MCF 10A (cell line): ENCODE measurements at regions of chr1 and their contacts with region 1.

Region 1: DNA sequence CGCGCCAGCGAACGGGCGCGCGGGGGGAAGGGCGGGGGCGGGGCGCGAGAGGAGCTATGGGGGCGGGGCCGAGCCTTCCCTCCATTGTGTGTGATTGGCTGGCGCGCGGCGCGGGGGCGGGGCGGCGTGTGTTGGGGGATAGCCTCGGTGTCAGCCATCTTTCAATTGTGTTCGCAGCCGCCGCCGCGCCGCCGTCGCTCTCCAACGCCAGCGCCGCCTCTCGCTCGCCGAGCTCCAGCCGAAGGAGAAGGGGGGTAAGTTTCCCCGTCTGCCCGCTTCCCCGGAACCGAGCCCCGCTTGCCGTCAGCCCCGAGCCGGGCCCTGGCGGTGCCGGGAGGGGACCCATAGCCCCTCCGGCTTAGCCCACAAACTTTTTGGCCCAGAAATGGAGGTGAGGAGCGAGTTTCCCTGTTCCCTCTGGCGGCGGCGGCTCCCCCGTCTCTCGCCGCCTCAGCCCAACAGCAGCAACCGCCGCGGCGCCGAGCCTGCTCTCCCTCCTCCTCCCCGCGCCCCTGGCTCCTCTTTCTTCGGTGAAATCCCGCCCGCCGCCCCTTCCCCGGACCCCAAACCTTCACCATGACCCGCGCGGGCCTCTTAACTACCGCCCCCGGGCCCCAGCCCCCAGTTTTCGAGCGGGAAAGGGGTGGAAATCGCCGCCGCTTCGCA is at the start of gene H3-3A:
- DNase-seq: peak; percentile 100
- H3K4me3 Mint-ChIP-seq: peak within 1 kb of the TSS; percentile 100
- H3K27ac Mint-ChIP-seq: peak within 1 kb of the TSS; percentile 99
- H3K4me1 Mint-ChIP-seq: peaks cover 35% of the 10 kb centered on the region
- H3K27me3 Mint-ChIP-seq: no peaks in the 10 kb centered on the region
- CTCF ChIP-seq: no peak
- total RNA-seq, gene H3-3A: 635 and 710 TPM in 2 replicates

Region 2: DNA sequence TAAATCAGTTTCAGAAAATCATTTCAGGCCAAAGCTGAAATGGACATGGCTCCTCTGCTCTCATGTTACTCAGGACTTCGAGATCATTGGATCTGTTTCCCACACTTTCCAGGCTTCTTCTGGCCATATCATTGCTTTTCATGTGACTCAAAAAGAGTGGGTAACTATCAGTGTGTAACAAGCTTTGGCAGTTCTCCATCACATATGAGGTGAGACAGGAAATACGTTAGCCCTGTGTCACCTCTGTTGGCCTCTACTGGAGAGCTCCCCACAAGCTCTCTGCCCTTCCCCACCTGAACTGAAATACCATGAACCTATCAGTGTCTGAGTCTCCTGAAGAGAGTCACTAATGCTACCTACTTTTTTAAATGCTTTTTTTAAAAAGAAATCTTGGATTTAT is 763.1 kb before region 1 on chr1:
- CTCF ChIA-PET with region 1: no interaction called
- POLR2A ChIA-PET with region 1: no interaction called
- intact Hi-C with region 1: no loop called
- DNase-seq: peak; percentile 79
- H3K4me3 Mint-ChIP-seq: no peak overlapping the region
- H3K27ac Mint-ChIP-seq: no peak overlapping the region
- H3K4me1 Mint-ChIP-seq: peaks cover 11% of the 10 kb centered on the region
- H3K27me3 Mint-ChIP-seq: no peaks in the 10 kb centered on the region
- CTCF ChIP-seq: no peak

Region 3: DNA sequence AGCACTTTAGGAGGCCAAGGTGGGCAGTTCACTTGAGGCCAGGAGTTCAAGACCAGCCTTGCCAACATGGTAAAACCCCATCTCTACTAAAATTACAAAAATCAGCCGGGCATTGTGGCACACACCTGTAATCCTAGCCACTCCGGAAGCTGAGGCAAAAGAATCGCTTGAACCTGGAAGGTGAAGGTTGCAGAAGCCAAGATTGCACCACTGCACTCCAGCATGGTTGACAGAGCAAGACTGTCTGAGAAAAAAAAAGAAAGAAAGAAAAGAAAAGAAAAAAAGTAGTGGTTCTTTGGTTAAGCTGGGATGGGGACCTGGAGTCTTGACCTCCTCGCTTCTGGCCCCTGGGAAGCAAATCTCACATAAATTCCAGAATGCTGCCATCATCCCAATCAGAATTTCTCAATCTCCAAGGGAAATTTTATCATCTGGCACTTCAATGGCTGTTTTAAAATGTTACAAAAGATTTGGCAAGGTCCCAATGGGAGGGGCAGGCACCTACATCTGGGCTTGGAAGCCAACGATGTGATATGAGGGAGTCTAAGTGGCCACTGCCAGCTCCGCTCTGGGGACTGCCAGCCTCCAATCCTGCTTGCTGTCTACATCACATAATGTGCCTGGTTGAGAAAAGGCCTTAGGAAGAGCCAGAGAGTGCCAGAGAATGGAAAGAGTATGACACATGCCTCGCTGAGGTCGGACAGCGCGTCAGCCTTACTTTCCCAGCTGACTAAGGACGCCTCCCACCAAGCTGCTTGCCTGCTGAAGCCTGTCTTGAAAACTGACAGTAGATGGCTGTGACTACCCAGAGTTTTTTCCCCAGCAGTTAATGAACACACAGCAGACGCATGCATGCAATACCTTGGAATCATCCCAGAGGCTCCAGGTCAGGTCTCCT is 327.2 kb before region 1 on chr1:
- CTCF ChIA-PET with region 1: interaction called, 3 read pairs
- POLR2A ChIA-PET with region 1: interaction called, 13 read pairs
- intact Hi-C with region 1: no loop called
- DNase-seq: peak; percentile 100
- H3K4me3 Mint-ChIP-seq: peak overlapping the region; percentile 60
- H3K27ac Mint-ChIP-seq: peak overlapping the region; percentile 89
- H3K4me1 Mint-ChIP-seq: peaks cover 33% of the 10 kb centered on the region
- H3K27me3 Mint-ChIP-seq: no peaks in the 10 kb centered on the region
- CTCF ChIP-seq: peak; percentile 9

Region 4: DNA sequence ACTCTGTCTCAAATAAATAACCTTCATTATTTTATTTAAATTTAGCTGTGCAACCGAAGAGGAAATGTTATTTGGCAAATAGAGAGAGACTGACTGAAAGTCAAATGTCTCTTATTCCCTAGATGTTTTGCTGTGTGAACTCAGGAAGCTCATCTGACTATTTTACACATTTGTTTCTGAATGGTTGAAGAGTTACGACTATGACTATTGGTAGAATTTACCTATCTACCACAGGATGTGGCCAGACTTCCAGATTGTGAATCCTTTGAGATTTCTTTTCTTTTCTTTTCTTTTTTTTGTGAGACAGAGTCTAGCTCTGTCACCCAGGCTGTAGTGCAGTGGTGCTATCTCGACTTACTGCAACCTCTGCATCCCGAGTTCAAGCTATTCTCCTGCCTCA is 58.3 kb before region 1 on chr1:
- CTCF ChIA-PET with region 1: interaction called, 6 read pairs
- POLR2A ChIA-PET with region 1: interaction called, 107 read pairs
- intact Hi-C with region 1: loop called (anchors 1 kb)
- DNase-seq: no peak
- H3K4me3 Mint-ChIP-seq: no peak overlapping the region
- H3K27ac Mint-ChIP-seq: no peak overlapping the region
- H3K4me1 Mint-ChIP-seq: peaks cover 14% of the 10 kb centered on the region
- H3K27me3 Mint-ChIP-seq: no peaks in the 10 kb centered on the region
- CTCF ChIP-seq: no peak

Region 5: DNA sequence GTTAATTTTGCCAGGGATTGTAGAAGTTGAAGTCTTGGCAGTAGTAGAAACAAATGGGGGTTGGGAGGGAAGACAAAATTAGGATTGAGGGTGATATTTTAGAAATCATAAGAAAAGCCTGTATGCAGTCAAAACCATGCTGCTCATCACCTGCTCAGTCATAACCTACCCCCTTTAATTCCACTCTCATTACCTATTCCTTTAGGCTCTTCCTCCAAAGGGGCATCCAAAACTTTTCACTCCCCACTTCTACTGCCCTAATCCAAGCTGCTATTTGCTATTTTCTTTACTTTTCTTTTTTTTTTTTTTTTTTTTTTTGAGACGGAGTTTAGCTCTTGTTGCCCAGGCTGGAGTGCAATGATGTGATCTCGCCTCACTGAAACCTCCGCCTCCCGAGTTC is 11.4 kb after region 1 on chr1:
- CTCF ChIA-PET with region 1: interaction called, 98 read pairs
- POLR2A ChIA-PET with region 1: interaction called, 55 read pairs
- intact Hi-C with region 1: no loop called
- DNase-seq: no peak
- H3K4me3 Mint-ChIP-seq: no peak overlapping the region
- H3K27ac Mint-ChIP-seq: peak overlapping the region; percentile 33
- H3K4me1 Mint-ChIP-seq: peaks cover 16% of the 10 kb centered on the region
- H3K27me3 Mint-ChIP-seq: no peaks in the 10 kb centered on the region
- CTCF ChIP-seq: no peak

Region 6: DNA sequence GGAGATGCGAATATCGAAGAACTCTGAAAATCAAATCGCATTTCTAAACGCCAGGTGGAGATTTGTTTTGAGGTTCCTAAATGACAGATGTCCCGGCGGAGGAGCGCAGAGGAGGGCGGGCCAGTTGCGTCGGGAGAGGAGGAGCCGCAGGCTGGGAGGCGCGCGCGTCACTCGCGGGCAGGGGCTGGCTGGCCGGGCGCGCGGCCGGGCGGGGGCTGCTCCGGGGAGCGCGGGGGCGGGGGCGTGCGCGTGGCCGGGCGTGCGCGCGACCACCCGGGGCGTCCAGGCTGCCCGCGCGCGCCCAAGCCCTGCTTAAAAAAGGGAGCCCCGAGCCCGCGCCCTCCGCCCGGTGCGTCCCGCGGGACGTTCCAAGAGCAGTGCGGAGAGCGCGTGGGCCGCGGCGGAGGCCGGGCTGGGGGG is 47.1 kb after region 1 on chr1:
- CTCF ChIA-PET with region 1: interaction called, 29 read pairs
- POLR2A ChIA-PET with region 1: interaction called, 115 read pairs
- intact Hi-C with region 1: no loop called
- DNase-seq: peak; percentile 96
- H3K4me3 Mint-ChIP-seq: peak overlapping the region; percentile 83
- H3K27ac Mint-ChIP-seq: peak overlapping the region; percentile 88
- H3K4me1 Mint-ChIP-seq: peaks cover 23% of the 10 kb centered on the region
- H3K27me3 Mint-ChIP-seq: no peaks in the 10 kb centered on the region
- CTCF ChIP-seq: peak; percentile 27

Region 7: GRCh38 chr1:226332947-226333346 is 270.3 kb after region 1 on chr1:
- CTCF ChIA-PET with region 1: interaction called, 13 read pairs
- POLR2A ChIA-PET with region 1: interaction called, 8 read pairs
- intact Hi-C with region 1: no loop called
- DNase-seq: no peak
- H3K4me3 Mint-ChIP-seq: peak overlapping the region; percentile 9
- H3K27ac Mint-ChIP-seq: no peak overlapping the region
- H3K4me1 Mint-ChIP-seq: peaks cover 6% of the 10 kb centered on the region
- H3K27me3 Mint-ChIP-seq: no peaks in the 10 kb centered on the region
- CTCF ChIP-seq: no peak